ENCODE measurements at regions of chr17 and their contacts with region 1.

Region 1: DNA sequence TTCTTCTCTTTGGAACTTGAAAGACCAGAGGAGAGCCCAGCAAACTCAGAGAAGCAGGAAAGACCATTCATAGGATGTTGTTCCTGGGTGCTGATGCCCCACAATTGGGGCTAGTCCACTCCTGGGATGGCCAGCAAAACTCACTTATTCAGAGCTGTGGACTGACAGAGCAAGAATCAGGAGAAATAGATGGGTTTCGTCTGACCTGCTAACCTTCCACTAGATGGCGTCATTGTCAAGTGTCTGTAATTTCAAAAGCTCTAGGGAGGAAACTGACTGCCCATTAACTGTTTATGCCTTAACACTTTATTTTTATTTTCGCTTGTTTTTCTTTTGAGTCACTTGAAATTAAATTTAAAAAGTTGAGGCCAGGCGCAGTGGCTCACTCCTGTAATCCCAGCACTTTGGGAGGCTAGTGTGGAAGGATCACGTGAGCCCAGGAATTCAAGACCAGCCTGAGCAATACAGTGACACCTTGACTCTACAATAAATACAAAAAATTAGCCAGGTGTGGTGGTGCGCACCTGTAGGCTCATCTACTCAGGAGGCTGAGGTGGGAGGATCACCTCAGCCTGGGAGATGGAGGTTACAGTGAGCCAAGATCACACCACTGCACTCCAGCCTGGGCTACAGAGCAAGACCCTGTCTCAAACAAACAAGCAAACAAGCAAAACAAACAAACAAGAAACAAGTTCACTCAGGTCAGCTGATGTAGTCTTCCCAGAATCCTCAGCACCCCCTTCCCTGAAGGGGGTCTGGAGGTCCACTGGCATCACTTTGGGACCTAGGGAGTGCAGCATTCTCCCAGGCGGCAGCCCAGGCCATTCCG is 28.6 kb upstream of the MILR1 start:
- DNase-seq: no peak
- H3K4me3 ChIP-seq: no peak overlapping the region
- H3K27ac ChIP-seq: no peak overlapping the region
- H3K4me1 ChIP-seq: peaks cover 0 to 3% of the 10 kb centered on the region in 2 donors
- H3K27me3 ChIP-seq: no peaks in the 10 kb centered on the region
- CTCF ChIP-seq: peak; percentile 60 to 71 (median 70)

Region 2: GRCh38 chr17:64306850-64307463 is 113.4 kb before region 1 on chr17:
- intact Hi-C with region 1: loop called (anchors 1 kb)
- DNase-seq: peak in 1 of 2 donors; percentile 78
- H3K4me3 ChIP-seq: no peak overlapping the region
- H3K27ac ChIP-seq: no peak overlapping the region
- H3K4me1 ChIP-seq: no peaks in the 10 kb centered on the region
- H3K27me3 ChIP-seq: no peaks in the 10 kb centered on the region
- CTCF ChIP-seq: peak; percentile 61 to 78 (median 69)

Region 3: DNA sequence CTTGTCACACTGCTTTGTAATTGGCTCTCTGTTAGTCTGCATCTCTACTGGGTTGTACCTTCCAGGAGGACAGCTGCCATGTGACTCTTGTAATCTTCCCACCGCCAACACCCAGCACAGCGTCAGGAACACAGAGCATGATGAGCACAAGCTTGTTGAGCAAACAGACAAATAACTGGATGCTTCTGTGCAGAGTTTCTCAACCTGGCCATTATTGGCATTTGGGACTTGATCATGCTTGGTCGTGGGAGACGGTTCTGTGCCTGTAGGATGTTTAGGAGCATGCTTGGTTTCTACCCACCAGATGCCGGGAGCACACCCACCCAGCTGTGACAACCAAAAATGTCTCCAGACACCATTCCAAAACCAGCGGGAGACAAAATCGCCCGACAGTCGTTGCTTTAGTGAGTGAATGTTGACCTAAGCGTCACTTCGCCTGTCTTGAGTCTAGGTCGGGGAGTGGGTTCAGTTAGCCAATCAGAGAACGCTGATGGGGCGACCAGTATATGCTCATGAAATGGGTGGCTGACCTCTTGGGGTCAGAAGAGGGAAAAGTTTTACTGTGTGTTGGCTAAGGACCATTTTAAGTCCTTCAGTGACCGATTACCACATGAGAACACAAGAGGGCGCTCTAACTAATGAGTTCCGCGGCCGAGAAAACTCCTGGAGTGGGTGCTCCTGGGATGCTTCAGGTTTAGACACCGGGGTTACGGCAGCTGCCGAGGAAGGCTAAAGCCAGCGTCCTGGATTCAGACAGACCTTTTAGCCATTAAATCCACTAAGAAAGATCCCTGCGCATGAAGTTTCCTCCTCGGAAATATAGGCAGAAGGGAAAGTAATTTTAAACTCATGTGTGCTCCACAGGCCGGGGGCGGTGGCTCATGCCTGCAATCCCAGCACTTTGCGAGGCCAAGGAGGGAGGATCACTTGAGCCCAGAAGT is 99.5 kb before region 1 on chr17:
- intact Hi-C with region 1: loop called (anchors 1 kb)
- DNase-seq: peak in 1 of 2 donors; percentile 80
- H3K4me3 ChIP-seq: peak overlapping the region in 1 of 2 donors; percentile 24
- H3K27ac ChIP-seq: no peak overlapping the region
- H3K4me1 ChIP-seq: peaks cover 0 to 6% of the 10 kb centered on the region in 2 donors
- H3K27me3 ChIP-seq: no peaks in the 10 kb centered on the region
- CTCF ChIP-seq: peak; percentile 67 to 74 (median 72)

Region 4: GRCh38 chr17:64406321-64407200 is 13.8 kb before region 1 on chr17:
- intact Hi-C with region 1: no loop called
- DNase-seq: no peak
- H3K4me3 ChIP-seq: no peak overlapping the region
- H3K27ac ChIP-seq: no peak overlapping the region
- H3K4me1 ChIP-seq: peaks cover 0 to under 1% of the 10 kb centered on the region in 2 donors
- H3K27me3 ChIP-seq: no peaks in the 10 kb centered on the region
- CTCF ChIP-seq: no peak

Region 5: GRCh38 chr17:64470625-64471024 is 50.3 kb after region 1 on chr17:
- intact Hi-C with region 1: no loop called
- DNase-seq: no peak
- H3K4me3 ChIP-seq: no peak overlapping the region
- H3K27ac ChIP-seq: no peak overlapping the region
- H3K4me1 ChIP-seq: no peaks in the 10 kb centered on the region
- H3K27me3 ChIP-seq: no peaks in the 10 kb centered on the region
- CTCF ChIP-seq: no peak

Region 6: GRCh38 chr17:64488301-64488700 is 67.9 kb after region 1 on chr17:
- intact Hi-C with region 1: loop called (anchors 5 kb)
- DNase-seq: no peak
- H3K4me3 ChIP-seq: no peak overlapping the region
- H3K27ac ChIP-seq: no peak overlapping the region
- H3K4me1 ChIP-seq: no peaks in the 10 kb centered on the region
- H3K27me3 ChIP-seq: no peaks in the 10 kb centered on the region
- CTCF ChIP-seq: no peak